ENCODE measurements at regions of chr1 and their contacts with region 1.

Region 1: DNA sequence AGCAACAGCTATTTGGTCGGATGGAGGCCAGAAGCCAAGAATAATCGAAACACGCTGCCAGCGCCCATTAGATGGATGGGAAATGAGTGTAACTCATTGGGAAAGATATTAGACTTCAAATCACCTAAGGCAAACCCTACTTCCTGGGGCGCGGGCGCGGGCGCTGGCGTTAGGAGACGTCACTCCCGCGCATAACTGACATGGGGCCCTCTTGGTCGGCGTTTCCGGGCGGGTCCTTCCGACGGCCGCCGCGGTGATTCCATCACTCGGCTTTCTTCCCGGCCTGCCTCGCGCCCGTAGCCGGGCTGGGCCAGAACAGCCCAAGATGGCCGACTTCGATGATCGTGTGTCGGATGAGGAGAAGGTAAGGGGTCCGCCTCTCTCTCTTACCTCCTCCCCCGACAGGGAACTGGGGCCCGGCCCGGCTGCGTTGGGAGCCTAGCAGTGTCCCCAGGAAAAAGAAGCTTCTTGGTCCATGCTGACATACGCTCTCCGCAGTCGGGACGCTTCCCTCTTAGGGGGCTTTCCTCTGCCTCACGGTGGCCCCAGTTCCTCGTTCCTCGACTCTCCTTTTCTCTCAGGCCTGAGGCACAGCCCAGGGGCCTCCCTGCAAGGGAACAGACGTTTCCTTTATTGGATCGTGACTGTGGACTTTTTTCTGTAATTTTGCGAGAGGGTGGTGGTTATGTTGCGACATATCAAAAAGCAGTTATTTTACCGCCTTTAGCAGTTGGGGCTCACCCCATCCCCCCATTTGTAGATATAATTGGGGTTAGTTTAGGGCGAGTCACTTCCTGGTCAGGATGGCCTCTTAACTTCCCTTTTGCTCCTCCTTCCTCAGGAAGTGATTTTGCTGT is at the start of gene CAPZA1:
- DNase-seq: peak; percentile 92 to 95 (median 94)
- ATAC-seq: peak; percentile 93 to 96 (median 95)
- H3K4me3 ChIP-seq: peak within 1 kb of the TSS; percentile 86 to 90 (median 87)
- H3K27ac ChIP-seq: peak within 1 kb of the TSS; percentile 93 to 98 (median 96)
- H3K4me1 ChIP-seq: peaks cover 0 to 20% (median 6%) of the 10 kb centered on the region in 4 donors
- H3K27me3 ChIP-seq: no peaks in the 10 kb centered on the region
- CTCF ChIP-seq: no peak
- POLR2A ChIP-seq: peak; percentile 82
- total RNA-seq, gene CAPZA1: 34.8 to 85.8 (median 54.7) TPM

Region 2: DNA sequence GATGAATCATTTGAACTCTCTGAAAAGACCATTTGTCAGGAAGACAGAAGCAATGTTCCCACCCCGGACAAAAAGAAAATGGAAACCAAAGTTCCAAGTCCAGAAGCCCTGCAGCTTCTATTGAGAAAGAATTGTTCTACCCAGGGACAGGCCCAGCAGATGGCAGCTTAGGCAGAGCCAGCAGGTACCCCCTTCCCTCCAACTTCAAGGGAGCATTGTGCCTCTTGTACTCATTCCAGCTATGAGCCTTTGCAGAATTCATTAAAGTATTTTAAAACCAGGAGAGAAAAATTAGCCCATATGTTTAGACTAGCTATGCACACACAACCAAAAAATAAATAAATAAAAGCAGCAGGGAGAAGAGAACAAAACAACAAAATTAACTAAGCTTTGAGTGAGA is 545.0 kb before region 1 on chr1:
- intact Hi-C with region 1: no loop called
- DNase-seq: no peak
- ATAC-seq: no peak
- H3K4me3 ChIP-seq: no peak overlapping the region
- H3K27ac ChIP-seq: no peak overlapping the region
- H3K4me1 ChIP-seq: no peaks in the 10 kb centered on the region
- H3K27me3 ChIP-seq: no peaks in the 10 kb centered on the region
- CTCF ChIP-seq: no peak
- POLR2A ChIP-seq: no peak

Region 3: GRCh38 chr1:112666946-112667345 is 47.2 kb after region 1 on chr1:
- intact Hi-C with region 1: no loop called
- DNase-seq: no peak
- ATAC-seq: no peak
- H3K4me3 ChIP-seq: no peak overlapping the region
- H3K27ac ChIP-seq: no peak overlapping the region
- H3K4me1 ChIP-seq: no peaks in the 10 kb centered on the region
- H3K27me3 ChIP-seq: no peaks in the 10 kb centered on the region
- CTCF ChIP-seq: no peak
- POLR2A ChIP-seq: no peak

Region 4: GRCh38 chr1:112706908-112707663 is 87.3 kb after region 1 on chr1 and contains the start of gene RHOC:
- intact Hi-C with region 1: loop called in 1 of 2 experiments (anchors 10 kb)
- DNase-seq: peak; percentile 89 to 92 (median 90)
- ATAC-seq: peak; percentile 72 to 89 (median 86)
- H3K4me3 ChIP-seq: peak within 1 kb of the TSS; percentile 85 to 99 (median 99)
- H3K27ac ChIP-seq: peak within 1 kb of the TSS; percentile 83 to 97 (median 89)
- H3K4me1 ChIP-seq: peaks cover 0 to 27% (median 9%) of the 10 kb centered on the region in 4 donors
- H3K27me3 ChIP-seq: no peaks in the 10 kb centered on the region
- CTCF ChIP-seq: peak; percentile 90 to 96 (median 93)
- POLR2A ChIP-seq: peak; percentile 90
- total RNA-seq, gene RHOC: 47.9 to 207 (median 107) TPM

Measured in right lobe of liver (tissue), 6 donors.